ENCODE measurements at regions of chr18 and their contacts with region 1.

Region 1: GRCh38 chr18:12391618-12392165 is 14.7 kb upstream of the AFG3L2 start:
- DNase-seq: peak; percentile 75
- ATAC-seq: peak; percentile 99
- H3K4me3 ChIP-seq: no peak overlapping the region
- H3K27ac ChIP-seq: no peak overlapping the region
- H3K4me1 ChIP-seq: no peaks in the 10 kb centered on the region
- H3K27me3 ChIP-seq: 0 out of 2 replicates have a peak, but pooled peaks cover 3% of the 10 kb centered on the region
- CTCF ChIP-seq: peak; percentile 96
- POLR2A ChIP-seq: peak; percentile 51; the same call in 1 of the 2 replicates
- RAD21 ChIP-seq: peak; percentile 98

Region 2: DNA sequence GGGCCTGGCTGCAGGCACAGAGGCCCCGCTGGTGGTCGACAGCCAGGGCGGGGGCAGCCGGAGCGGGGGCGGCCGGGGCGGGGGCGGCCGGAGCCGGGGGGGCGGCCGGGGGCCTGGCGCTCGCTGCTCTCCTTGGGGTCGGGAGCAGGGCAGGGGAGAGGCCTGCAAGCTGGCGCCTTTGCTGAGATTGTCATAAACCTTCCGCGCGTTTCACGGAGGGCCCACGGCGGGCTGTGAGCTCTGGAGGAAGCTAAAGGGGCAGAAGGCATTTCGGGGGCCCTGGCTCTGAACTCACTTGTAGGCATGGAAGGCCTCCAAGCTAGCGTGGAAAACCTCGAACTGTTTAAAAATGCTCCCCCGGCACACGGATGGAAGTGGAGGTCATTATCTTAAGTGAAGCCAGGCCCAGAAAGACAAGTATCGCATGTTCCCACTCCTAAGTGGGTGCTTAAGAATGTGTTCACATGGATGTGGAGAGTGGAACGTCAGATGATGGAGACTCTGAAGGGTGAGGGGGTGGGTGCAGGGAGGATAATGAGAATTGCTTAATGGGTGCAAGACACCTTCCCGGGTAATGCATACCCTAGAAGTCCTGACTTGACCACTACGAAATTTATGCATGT is 16.7 kb after region 1 on chr18:
- CTCF ChIA-PET with region 1: interaction called, 4 read pairs
- POLR2A ChIA-PET with region 1: interaction called, 11 read pairs
- dilution Hi-C with region 1: no loop called
- in situ Hi-C with region 1: no loop called
- intact Hi-C with region 1: no loop called
- DNase-seq: no peak
- ATAC-seq: peak; percentile 13; the same call in 1 of the 2 replicates
- H3K4me3 ChIP-seq: peak overlapping the region; percentile 68
- H3K27ac ChIP-seq: peak overlapping the region; percentile 86
- H3K4me1 ChIP-seq: peaks cover 4% of the 10 kb centered on the region
- H3K27me3 ChIP-seq: no peaks in the 10 kb centered on the region; the same call in 1 of the 2 replicates
- CTCF ChIP-seq: no peak
- POLR2A ChIP-seq: no peak
- RAD21 ChIP-seq: no peak

Region 3: DNA sequence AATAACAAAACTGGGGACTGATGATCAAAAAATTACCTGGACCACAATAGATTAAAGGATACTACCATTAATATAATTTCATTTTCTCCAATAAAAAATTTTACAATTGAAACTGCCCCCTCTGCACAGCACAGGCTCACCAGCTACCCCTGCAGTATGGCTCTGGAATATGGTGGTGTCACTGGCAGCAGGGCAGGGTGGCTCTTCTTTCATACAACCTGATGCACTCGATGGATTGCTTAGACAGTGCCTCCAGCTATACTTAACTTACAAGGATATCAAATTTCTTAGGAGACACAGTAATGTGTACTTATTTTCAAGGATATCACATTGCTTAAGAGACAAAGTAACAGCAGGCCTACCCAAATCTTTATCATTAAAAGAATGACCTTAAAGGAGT is 140.1 kb after region 1 on chr18:
- CTCF ChIA-PET with region 1: no interaction called
- POLR2A ChIA-PET with region 1: no interaction called
- dilution Hi-C with region 1: no loop called
- in situ Hi-C with region 1: loop called (anchors 5 kb)
- intact Hi-C with region 1: loop called (anchors 5 kb)
- DNase-seq: peak; percentile 34
- ATAC-seq: peak; percentile 81
- H3K4me3 ChIP-seq: no peak overlapping the region
- H3K27ac ChIP-seq: no peak overlapping the region
- H3K4me1 ChIP-seq: no peaks in the 10 kb centered on the region; the same call in none of the 2 replicates
- H3K27me3 ChIP-seq: no peaks in the 10 kb centered on the region
- CTCF ChIP-seq: no peak
- POLR2A ChIP-seq: no peak
- RAD21 ChIP-seq: no peak

Region 4: GRCh38 chr18:12657684-12658425 is 266.2 kb after region 1 on chr18 and contains the start of gene SPIRE1:
- CTCF ChIA-PET with region 1: interaction called, 8 read pairs
- POLR2A ChIA-PET with region 1: interaction called, 4 read pairs
- dilution Hi-C with region 1: no loop called
- in situ Hi-C with region 1: no loop called
- intact Hi-C with region 1: loop called (anchors 1 kb)
- DNase-seq: peak; percentile 52
- ATAC-seq: peak; percentile 90
- H3K4me3 ChIP-seq: peak within 1 kb of the TSS; percentile 91
- H3K27ac ChIP-seq: peak within 1 kb of the TSS; percentile 69
- H3K4me1 ChIP-seq: peaks cover 3% of the 10 kb centered on the region
- H3K27me3 ChIP-seq: no peaks in the 10 kb centered on the region
- CTCF ChIP-seq: peak; percentile 12; the same call in 1 of the 2 replicates
- POLR2A ChIP-seq: no peak; the same call in none of the 2 replicates
- RAD21 ChIP-seq: no peak; the same call in 1 of the 2 replicates
- total RNA-seq, gene SPIRE1: 28.3 and 31.4 TPM in 2 replicates

Region 5: DNA sequence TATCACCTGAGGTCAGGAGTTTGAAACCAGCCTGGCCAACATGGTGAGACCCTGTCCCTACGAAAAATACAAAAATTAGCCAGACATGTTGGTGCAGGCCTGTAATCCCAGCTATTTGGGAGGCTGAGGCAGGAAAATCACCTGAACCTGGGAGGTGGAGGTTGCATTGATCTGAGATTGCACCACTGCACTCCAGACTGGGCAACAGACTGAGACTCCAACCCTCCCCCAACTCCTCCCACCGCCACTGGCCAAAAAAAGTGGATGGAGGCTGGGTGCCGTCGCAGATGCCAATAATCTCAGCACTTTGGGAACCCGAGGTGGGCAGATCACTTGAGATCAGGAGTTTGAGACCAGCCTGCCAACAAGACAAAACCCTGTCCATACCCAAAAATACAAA is 276.3 kb after region 1 on chr18:
- CTCF ChIA-PET with region 1: interaction called, 5 read pairs
- POLR2A ChIA-PET with region 1: no interaction called
- dilution Hi-C with region 1: no loop called
- in situ Hi-C with region 1: loop called (anchors 5 kb)
- intact Hi-C with region 1: no loop called
- DNase-seq: no peak
- ATAC-seq: no peak
- H3K4me3 ChIP-seq: no peak overlapping the region
- H3K27ac ChIP-seq: no peak overlapping the region
- H3K4me1 ChIP-seq: no peaks in the 10 kb centered on the region
- H3K27me3 ChIP-seq: no peaks in the 10 kb centered on the region
- CTCF ChIP-seq: no peak
- POLR2A ChIP-seq: no peak
- RAD21 ChIP-seq: no peak

Region 6: DNA sequence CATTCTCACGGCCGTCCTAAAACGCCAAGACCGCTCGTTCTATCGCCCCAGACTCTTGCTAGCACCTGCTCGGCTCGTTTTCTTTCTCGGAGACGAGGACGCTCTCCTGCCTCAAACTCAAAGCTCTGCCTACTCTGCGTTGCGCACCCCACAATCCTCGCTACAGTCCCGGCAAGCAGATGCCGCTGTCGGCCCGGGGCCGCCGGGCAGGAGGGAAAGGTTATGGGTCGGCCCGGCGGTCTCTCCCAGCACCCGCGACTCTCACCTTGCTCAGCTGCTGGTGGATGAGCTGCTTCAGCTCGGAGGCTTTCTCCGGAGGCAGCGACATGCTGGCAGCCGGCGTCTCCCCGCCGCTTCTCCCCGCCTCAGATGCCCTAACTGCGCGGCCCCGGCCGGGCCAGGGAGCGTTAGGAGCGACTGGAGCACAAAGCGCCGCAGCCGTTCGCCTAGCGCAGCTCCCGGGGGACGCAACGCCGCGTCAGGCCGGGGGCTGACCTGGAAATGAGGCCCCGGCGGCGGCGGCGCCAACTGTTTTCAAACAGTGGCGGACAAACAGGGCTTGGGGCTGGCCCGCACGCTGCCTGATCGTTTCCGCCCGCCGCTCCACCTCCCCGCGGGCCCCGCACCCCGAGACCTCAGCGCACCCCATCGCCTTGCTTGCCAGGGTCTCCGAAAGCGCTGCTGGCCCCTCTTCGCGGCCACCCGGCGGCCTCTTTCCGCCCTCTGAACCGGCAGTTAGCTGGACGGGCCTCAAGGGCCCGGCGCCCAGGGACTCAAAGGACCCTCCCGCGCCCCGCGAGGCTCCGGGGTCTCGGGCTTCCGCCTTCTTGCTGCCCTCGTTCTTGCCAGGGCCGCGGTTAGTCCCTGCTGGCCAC is 310.8 kb after region 1 on chr18 and contains the starts of genes CEP76 and PSMG2:
- CTCF ChIA-PET with region 1: interaction called, 3 read pairs
- POLR2A ChIA-PET with region 1: no interaction called
- dilution Hi-C with region 1: no loop called
- in situ Hi-C with region 1: no loop called
- intact Hi-C with region 1: loop called (anchors 1 kb)
- DNase-seq: peak; percentile 84
- ATAC-seq: peak; percentile 94
- H3K4me3 ChIP-seq: peak within 1 kb of the TSS; percentile 89
- H3K27ac ChIP-seq: peak within 1 kb of the TSS; percentile 98
- H3K4me1 ChIP-seq: peaks cover 4% of the 10 kb centered on the region; the same call in 1 of the 2 replicates
- H3K27me3 ChIP-seq: no peaks in the 10 kb centered on the region
- CTCF ChIP-seq: no peak
- POLR2A ChIP-seq: peak; percentile 92
- RAD21 ChIP-seq: no peak
- total RNA-seq, gene CEP76: 8.1 and 8.3 TPM in 2 replicates
- total RNA-seq, gene PSMG2: 59.5 and 60.8 TPM in 2 replicates

Region 7: DNA sequence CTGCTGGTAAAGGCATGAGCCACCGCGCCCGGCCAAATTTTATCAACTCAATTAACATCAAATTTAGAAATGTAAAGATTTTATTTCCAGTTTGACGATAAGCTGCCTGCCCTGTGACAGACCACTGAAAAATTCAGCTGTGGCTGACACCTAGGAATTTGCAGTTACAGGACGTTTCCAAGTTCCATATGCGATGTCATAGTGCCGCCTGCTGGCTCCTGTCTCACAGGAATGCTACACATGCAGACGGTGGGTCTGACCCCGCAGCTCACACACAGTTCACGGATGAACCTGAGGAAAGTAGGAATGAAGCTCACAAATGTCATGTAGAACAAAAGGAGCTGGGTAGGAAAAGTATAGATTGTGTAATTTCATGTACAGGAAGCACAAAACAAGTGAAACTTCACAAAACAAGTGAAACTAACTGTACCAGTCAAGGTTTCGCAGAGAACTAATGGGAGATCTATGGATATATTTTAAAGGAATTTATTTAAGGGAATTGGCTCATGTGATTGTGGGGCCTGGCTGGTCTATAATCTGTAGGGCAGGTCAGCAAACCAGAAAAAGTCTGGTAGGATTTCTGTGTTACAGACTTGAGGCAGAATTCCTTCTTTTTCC is 542.9 kb after region 1 on chr18:
- CTCF ChIA-PET with region 1: interaction called, 14 read pairs
- POLR2A ChIA-PET with region 1: no interaction called
- dilution Hi-C with region 1: no loop called
- in situ Hi-C with region 1: no loop called
- intact Hi-C with region 1: loop called (anchors 1 kb)
- DNase-seq: peak; percentile 83
- ATAC-seq: peak; percentile 97
- H3K4me3 ChIP-seq: no peak overlapping the region
- H3K27ac ChIP-seq: no peak overlapping the region
- H3K4me1 ChIP-seq: no peaks in the 10 kb centered on the region
- H3K27me3 ChIP-seq: no peaks in the 10 kb centered on the region
- CTCF ChIP-seq: peak; percentile 97
- POLR2A ChIP-seq: peak; percentile 58
- RAD21 ChIP-seq: peak; percentile 100

Measured in IMR-90 (cell line).